Left cardiac atrium (tissue), 4 donors: ENCODE measurements at regions of chr17 and their contacts with region 1.

Region 1: GRCh38 chr17:60720763-60721531 is 43.3 kb downstream of the BCAS3 start:
- DNase-seq: no peak
- ATAC-seq: peak in 1 of 2 donors; percentile 53

Region 2: GRCh38 chr17:61551255-61551742 is 830.4 kb after region 1 on chr17:
- intact Hi-C with region 1: loop called in 1 of 2 experiments (anchors 10 kb)
- DNase-seq: no peak
- ATAC-seq: peak in 1 of 2 donors; percentile 41

Region 3: GRCh38 chr17:61837175-61838051 is 1116.5 kb after region 1 on chr17:
- intact Hi-C with region 1: loop called in 1 of 2 experiments (anchors 5 kb)
- DNase-seq: peak; percentile 45
- ATAC-seq: peak in 1 of 2 donors; percentile 44